B cell (primary cell): ENCODE measurements at regions of chr16 and their contacts with region 1.

Region 1: DNA sequence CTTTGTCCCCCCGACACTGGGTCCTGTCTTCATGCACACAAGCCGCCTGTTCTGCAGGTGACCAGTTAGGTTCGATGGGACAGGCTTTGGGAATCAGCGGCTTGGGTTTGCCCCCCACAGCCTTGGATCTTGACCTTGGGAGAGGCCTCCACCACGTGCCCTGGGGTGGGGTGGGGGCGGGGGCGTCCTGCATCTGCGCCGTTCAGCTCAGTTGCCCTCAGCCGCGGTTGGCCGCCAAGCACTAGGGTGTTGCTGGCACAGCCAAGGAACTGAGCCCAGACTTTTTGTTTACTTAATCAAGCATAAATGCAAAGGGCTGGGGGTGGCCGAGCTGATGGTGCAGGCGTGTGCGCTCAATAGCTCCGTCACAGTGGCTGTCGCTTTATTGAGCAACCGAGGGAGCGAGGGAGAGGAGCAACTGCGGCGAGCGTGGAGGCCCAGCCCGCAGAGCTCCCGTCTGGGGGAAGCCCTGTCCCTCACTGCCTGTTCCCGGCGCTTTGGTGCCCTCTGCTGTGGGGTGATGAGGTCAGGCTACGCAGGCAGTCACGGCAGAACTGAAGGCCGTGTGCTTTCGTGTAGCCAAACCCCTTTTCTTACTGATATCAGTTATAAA is 33.9 kb downstream of the JPH3 start:
- DNase-seq: peak; percentile 82
- ATAC-seq: peak; percentile 81
- H3K4me3 ChIP-seq: peak overlapping the region in 4 of 5 experiments; percentile 28 to 55 (median 50)
- H3K4me3 Mint-ChIP-seq: peak overlapping the region; percentile 90
- H3K27ac ChIP-seq: peak overlapping the region; percentile 26 to 49
- H3K27ac Mint-ChIP-seq: peak overlapping the region; percentile 84
- H3K4me1 ChIP-seq: peaks cover 13 to 23% of the 10 kb centered on the region in 2 donors
- H3K4me1 Mint-ChIP-seq: peaks cover 18% of the 10 kb centered on the region
- H3K27me3 ChIP-seq: peaks cover 0 to 7% (median 0%) of the 10 kb centered on the region in 4 experiments
- H3K27me3 Mint-ChIP-seq: peaks cover 16% of the 10 kb centered on the region
- CTCF ChIP-seq: peak; percentile 66

Region 2: DNA sequence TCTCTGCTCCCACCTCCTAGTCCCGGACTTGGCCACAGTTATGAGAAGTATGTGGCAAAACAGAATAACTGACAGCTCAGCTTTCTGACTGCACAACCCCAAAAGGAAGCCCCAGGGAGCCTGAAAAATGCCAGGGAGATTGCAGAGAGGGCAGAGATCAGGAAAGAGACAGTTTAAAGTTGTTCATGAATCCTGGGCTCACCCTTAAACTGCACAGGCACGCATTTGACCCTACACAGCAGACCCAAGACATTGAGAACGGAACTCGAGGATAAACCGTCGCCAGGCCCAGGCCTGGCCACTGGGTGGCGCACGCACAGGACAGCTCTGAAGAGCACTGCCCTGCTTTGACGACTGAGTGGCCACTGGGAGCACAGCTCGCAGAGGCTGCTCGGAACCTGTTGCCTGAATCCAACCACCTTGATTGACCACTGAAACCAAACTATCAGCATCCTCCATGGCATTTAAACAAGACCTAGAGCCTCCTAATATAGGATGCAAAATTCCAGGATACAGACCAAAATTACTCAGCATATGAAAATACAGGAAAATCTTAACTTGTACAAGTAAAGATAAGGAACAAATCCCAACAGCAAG is 433.0 kb before region 1 on chr16:
- CTCF ChIA-PET with region 1: no interaction called
- POLR2A ChIA-PET with region 1: no interaction called
- intact Hi-C with region 1: loop called (anchors 5 kb)
- DNase-seq: peak; percentile 34
- ATAC-seq: no peak
- H3K4me3 ChIP-seq: no peak overlapping the region
- H3K4me3 Mint-ChIP-seq: no peak overlapping the region
- H3K27ac ChIP-seq: no peak overlapping the region
- H3K27ac Mint-ChIP-seq: no peak overlapping the region
- H3K4me1 ChIP-seq: no peaks in the 10 kb centered on the region
- H3K4me1 Mint-ChIP-seq: no peaks in the 10 kb centered on the region
- H3K27me3 ChIP-seq: no peaks in the 10 kb centered on the region
- H3K27me3 Mint-ChIP-seq: peaks cover 15% of the 10 kb centered on the region
- CTCF ChIP-seq: peak; percentile 57

Region 3: DNA sequence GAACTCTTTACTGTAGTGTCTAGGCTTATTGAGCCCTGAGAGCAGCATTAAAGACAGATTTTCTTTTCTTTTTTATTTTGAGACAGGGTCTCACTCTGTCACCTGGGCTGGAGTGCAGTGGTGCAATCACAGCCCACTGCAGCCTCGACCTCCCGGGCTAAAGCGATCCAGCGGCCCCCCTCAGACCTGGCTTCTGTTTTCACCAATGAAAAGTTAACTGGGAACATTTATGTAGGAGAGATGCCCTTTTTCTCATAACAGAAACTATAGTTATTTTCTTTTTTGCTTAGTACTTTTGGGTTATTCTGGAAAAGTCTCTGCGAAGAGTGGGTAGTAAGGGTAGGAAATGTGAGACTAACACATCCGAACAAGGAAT is 242.5 kb before region 1 on chr16:
- CTCF ChIA-PET with region 1: interaction called, 17 read pairs
- POLR2A ChIA-PET with region 1: no interaction called
- intact Hi-C with region 1: no loop called
- DNase-seq: no peak
- ATAC-seq: no peak
- H3K4me3 ChIP-seq: peak overlapping the region in 4 of 5 experiments; percentile 57 to 79 (median 70)
- H3K4me3 Mint-ChIP-seq: peak overlapping the region; percentile 94
- H3K27ac ChIP-seq: peak overlapping the region in 1 of 2 donors; percentile 95
- H3K27ac Mint-ChIP-seq: peak overlapping the region; percentile 91
- H3K4me1 ChIP-seq: peaks cover 28 to 34% of the 10 kb centered on the region in 2 donors
- H3K4me1 Mint-ChIP-seq: peaks cover 46% of the 10 kb centered on the region
- H3K27me3 ChIP-seq: no peaks in the 10 kb centered on the region
- H3K27me3 Mint-ChIP-seq: no peaks in the 10 kb centered on the region
- CTCF ChIP-seq: no peak

Region 4: GRCh38 chr16:87492721-87493607 is 143.2 kb before region 1 on chr16 and contains the start of gene ZCCHC14:
- CTCF ChIA-PET with region 1: no interaction called
- POLR2A ChIA-PET with region 1: no interaction called
- intact Hi-C with region 1: loop called (anchors 10 kb)
- DNase-seq: peak; percentile 95
- ATAC-seq: peak; percentile 97
- H3K4me3 ChIP-seq: peak within 1 kb of the TSS in 4 of 5 experiments; percentile 35 to 61 (median 46)
- H3K4me3 Mint-ChIP-seq: peak within 1 kb of the TSS; percentile 88
- H3K27ac ChIP-seq: no peak within 1 kb of the TSS
- H3K27ac Mint-ChIP-seq: peak within 1 kb of the TSS; percentile 61
- H3K4me1 ChIP-seq: peaks cover 28 to 33% of the 10 kb centered on the region in 2 donors
- H3K4me1 Mint-ChIP-seq: peaks cover 43% of the 10 kb centered on the region
- H3K27me3 ChIP-seq: peaks cover 0 to 51% (median 15%) of the 10 kb centered on the region in 4 experiments
- H3K27me3 Mint-ChIP-seq: peaks cover 45% of the 10 kb centered on the region
- CTCF ChIP-seq: no peak
- total RNA-seq, gene ZCCHC14: 4.4 and 6.3 TPM in 2 replicates

Region 5: GRCh38 chr16:87647431-87648185 is 11.4 kb after region 1 on chr16:
- CTCF ChIA-PET with region 1: interaction called, 13 read pairs
- POLR2A ChIA-PET with region 1: no interaction called
- intact Hi-C with region 1: no loop called
- DNase-seq: no peak
- ATAC-seq: no peak
- H3K4me3 ChIP-seq: no peak overlapping the region
- H3K4me3 Mint-ChIP-seq: no peak overlapping the region
- H3K27ac ChIP-seq: no peak overlapping the region
- H3K27ac Mint-ChIP-seq: no peak overlapping the region
- H3K4me1 ChIP-seq: no peaks in the 10 kb centered on the region
- H3K4me1 Mint-ChIP-seq: no peaks in the 10 kb centered on the region
- H3K27me3 ChIP-seq: peaks cover 0 to 6% (median 0%) of the 10 kb centered on the region in 4 experiments
- H3K27me3 Mint-ChIP-seq: peaks cover 8% of the 10 kb centered on the region
- CTCF ChIP-seq: no peak

Region 6: DNA sequence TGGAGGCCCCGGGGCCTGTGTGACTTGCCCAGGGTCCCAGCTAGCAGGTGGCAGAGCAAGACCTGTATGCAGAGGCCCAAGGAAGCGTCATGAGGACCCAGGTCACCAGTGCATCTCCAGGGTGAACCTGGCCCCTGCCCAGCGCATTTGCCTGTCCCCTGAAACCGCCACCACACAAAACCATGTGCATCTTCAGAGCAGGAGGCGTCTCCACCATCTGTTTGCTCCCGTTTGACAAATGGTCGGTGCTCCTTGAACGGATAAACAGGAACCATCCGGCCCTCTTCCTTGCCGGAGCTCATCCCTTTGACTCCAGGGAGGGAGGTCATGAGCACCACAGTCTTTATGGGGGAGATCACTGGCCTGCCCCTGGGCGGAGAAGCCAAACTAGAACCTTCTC is 28.6 kb after region 1 on chr16:
- CTCF ChIA-PET with region 1: no interaction called
- POLR2A ChIA-PET with region 1: no interaction called
- intact Hi-C with region 1: no loop called
- DNase-seq: no peak
- ATAC-seq: no peak
- H3K4me3 ChIP-seq: no peak overlapping the region
- H3K4me3 Mint-ChIP-seq: no peak overlapping the region
- H3K27ac ChIP-seq: no peak overlapping the region
- H3K27ac Mint-ChIP-seq: no peak overlapping the region
- H3K4me1 ChIP-seq: peaks cover 0 to 9% of the 10 kb centered on the region in 2 donors
- H3K4me1 Mint-ChIP-seq: no peaks in the 10 kb centered on the region
- H3K27me3 ChIP-seq: peaks cover 0 to 8% (median 2%) of the 10 kb centered on the region in 4 experiments
- H3K27me3 Mint-ChIP-seq: peaks cover 13% of the 10 kb centered on the region
- CTCF ChIP-seq: no peak

Region 7: DNA sequence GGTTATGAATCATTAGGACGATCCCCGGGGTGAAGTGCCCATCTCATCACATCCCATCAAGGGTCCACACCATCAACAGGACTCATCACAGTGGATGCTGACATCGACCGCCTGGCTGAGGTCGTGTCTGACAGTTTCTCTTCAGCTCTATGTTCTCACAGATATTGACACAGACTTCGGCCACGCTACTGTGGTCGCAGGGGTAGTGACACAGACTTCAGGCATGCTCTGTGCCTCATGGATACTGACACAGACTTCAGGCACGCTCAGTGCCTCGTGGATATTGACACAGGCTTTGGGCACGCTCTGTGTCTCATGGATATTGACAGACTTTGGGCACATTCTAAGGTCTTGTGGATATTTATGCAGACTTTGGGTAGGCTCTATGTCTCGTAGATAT is 79.5 kb after region 1 on chr16:
- CTCF ChIA-PET with region 1: no interaction called
- POLR2A ChIA-PET with region 1: no interaction called
- intact Hi-C with region 1: no loop called
- DNase-seq: no peak
- ATAC-seq: no peak
- H3K4me3 ChIP-seq: no peak overlapping the region
- H3K4me3 Mint-ChIP-seq: no peak overlapping the region
- H3K27ac ChIP-seq: no peak overlapping the region
- H3K27ac Mint-ChIP-seq: no peak overlapping the region
- H3K4me1 ChIP-seq: peaks cover 6 to 9% of the 10 kb centered on the region in 2 donors
- H3K4me1 Mint-ChIP-seq: peaks cover 10% of the 10 kb centered on the region
- H3K27me3 ChIP-seq: no peaks in the 10 kb centered on the region
- H3K27me3 Mint-ChIP-seq: no peaks in the 10 kb centered on the region
- CTCF ChIP-seq: no peak